ENCODE measurements at regions of chr16 and their contacts with region 1.

Region 1: GRCh38 chr16:23435500-23435899 is 17.5 kb downstream of the COG7 start:
- DNase-seq: peak; percentile 72
- H3K4me3 Mint-ChIP-seq: no peak overlapping the region
- H3K27ac Mint-ChIP-seq: no peak overlapping the region
- H3K4me1 Mint-ChIP-seq: peaks cover 3% of the 10 kb centered on the region
- H3K27me3 Mint-ChIP-seq: no peaks in the 10 kb centered on the region

Region 2: DNA sequence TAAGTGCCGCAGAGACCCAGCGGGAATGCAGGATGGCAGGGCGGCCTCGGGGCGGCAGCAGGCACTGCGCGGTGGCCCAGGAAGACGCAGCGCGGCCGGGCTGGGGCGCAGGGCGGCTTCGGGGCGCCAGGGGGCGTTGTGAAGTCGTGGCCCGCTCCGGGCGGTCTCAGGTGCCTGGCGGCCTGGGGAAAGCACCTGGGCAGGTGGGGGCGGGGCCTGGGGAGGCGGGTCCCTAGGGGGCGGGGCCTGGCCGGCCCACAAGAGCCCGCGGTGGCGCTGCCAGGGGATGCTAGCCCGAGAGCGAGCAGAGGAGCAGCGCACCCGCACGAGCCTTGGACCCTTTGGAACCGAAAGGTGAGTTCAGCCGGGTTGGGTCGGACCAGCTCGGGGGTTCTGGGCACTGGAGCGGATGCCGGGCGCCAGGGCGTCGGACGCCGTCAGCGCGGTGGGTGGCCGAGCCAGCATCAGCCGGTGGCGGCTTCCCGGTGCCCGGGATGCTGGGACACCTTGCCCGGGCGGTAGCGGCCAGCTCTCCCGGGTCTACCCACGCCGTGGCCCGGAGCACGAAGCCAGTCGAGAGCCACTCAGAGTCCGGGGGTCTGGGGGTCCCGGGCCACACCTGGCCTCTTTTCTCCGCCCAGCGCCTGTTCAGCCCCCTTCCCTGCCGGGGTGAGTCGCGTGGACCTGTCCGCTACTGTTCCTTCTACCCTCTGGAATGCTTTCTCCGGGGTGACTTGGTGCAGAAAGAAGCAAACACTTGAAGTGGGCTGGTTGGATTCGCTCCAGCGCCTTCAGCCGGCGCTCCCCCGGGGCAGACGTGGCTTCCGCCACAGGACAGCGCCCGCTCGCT is 252.8 kb before region 1 on chr16 and contains the start of gene SCNN1G:
- CTCF ChIA-PET with region 1: interaction called, 100 read pairs
- POLR2A ChIA-PET with region 1: no interaction called
- DNase-seq: peak; percentile 76
- H3K4me3 Mint-ChIP-seq: peak within 1 kb of the TSS; percentile 16
- H3K27ac Mint-ChIP-seq: no peak within 1 kb of the TSS
- H3K4me1 Mint-ChIP-seq: peaks cover 8% of the 10 kb centered on the region
- H3K27me3 Mint-ChIP-seq: peaks cover 58% of the 10 kb centered on the region
- total RNA-seq, gene SCNN1G: not detected

Region 3: GRCh38 chr16:23330583-23331249 is 104.8 kb before region 1 on chr16:
- CTCF ChIA-PET with region 1: no interaction called
- POLR2A ChIA-PET with region 1: no interaction called
- DNase-seq: no peak
- H3K4me3 Mint-ChIP-seq: no peak overlapping the region
- H3K27ac Mint-ChIP-seq: no peak overlapping the region
- H3K4me1 Mint-ChIP-seq: peaks cover 1% of the 10 kb centered on the region
- H3K27me3 Mint-ChIP-seq: peaks cover 3% of the 10 kb centered on the region

Region 4: GRCh38 chr16:23416816-23417215 is 18.7 kb before region 1 on chr16:
- CTCF ChIA-PET with region 1: interaction called, 25 read pairs
- POLR2A ChIA-PET with region 1: no interaction called
- DNase-seq: no peak
- H3K4me3 Mint-ChIP-seq: no peak overlapping the region
- H3K27ac Mint-ChIP-seq: no peak overlapping the region
- H3K4me1 Mint-ChIP-seq: no peaks in the 10 kb centered on the region
- H3K27me3 Mint-ChIP-seq: no peaks in the 10 kb centered on the region

Region 5: GRCh38 chr16:23423496-23424049 is 11.9 kb before region 1 on chr16:
- CTCF ChIA-PET with region 1: interaction called, 32 read pairs
- POLR2A ChIA-PET with region 1: no interaction called
- DNase-seq: no peak
- H3K4me3 Mint-ChIP-seq: no peak overlapping the region
- H3K27ac Mint-ChIP-seq: no peak overlapping the region
- H3K4me1 Mint-ChIP-seq: no peaks in the 10 kb centered on the region
- H3K27me3 Mint-ChIP-seq: no peaks in the 10 kb centered on the region

Region 6: GRCh38 chr16:23452572-23453337 is 17.3 kb after region 1 on chr16 and contains the start of gene COG7:
- CTCF ChIA-PET with region 1: interaction called, 15 read pairs
- POLR2A ChIA-PET with region 1: no interaction called
- DNase-seq: peak; percentile 89
- H3K4me3 Mint-ChIP-seq: peak within 1 kb of the TSS; percentile 90
- H3K27ac Mint-ChIP-seq: peak within 1 kb of the TSS; percentile 58
- H3K4me1 Mint-ChIP-seq: peaks cover 27% of the 10 kb centered on the region
- H3K27me3 Mint-ChIP-seq: no peaks in the 10 kb centered on the region
- total RNA-seq, gene COG7: 18.0 to 19.0 TPM

Region 7: DNA sequence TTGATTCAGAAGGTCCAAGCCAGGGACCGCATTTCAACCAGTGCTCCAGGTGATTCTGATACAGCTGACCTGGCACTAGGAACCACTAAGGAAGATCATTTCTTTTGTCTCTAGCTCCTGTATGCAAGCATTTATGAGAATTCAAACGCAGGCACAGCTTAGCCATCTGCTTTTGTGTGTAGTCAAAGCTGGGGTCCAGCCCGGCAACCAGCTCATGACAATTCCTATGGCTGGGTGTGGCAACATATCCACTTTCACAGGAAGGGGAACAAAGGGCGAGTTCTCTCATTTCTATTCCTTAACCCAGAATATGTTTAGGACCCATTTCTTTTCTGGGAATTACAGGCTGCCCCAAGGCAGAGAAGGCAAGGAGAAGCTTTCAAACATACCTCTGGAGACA is 44.8 kb after region 1 on chr16:
- CTCF ChIA-PET with region 1: no interaction called
- POLR2A ChIA-PET with region 1: no interaction called
- DNase-seq: no peak
- H3K4me3 Mint-ChIP-seq: no peak overlapping the region
- H3K27ac Mint-ChIP-seq: no peak overlapping the region
- H3K4me1 Mint-ChIP-seq: peaks cover 10% of the 10 kb centered on the region
- H3K27me3 Mint-ChIP-seq: no peaks in the 10 kb centered on the region

Region 8: DNA sequence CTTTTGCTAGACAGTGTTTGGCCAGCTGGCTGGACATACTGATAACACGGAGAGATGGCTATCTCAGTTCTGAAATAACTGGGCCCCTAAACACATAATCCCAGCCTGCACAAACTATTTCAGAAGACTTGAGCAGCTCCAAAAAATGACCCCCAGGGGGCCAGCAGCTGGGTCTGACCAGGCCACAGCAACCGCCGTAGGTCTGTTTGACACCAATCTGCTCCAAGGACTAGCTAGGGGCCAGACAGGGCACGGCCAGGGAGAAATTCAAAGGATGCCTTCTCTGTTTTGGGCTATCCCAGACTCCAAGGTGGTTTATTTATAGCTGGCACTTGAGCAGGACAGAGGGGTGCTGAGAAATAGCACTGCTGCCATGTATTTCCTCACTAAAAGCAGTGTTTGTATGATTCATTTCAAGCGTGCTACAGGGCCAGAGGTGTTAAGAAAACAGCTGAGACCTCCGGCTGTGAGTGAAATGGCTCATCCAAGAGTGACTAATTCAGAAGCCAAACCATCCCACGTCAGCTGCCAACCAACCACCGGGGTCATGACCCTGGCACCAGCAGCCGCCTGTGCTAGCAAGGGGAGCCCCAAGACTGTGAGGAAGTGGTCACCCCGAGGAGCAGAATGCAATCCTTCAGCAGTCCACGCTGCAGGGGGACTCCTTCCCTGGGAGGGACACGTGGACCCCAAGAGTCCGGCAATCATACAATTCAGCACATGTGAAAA is 69.1 kb after region 1 on chr16:
- CTCF ChIA-PET with region 1: interaction called, 10 read pairs
- POLR2A ChIA-PET with region 1: no interaction called
- DNase-seq: peak; percentile 92
- H3K4me3 Mint-ChIP-seq: peak overlapping the region; percentile 2
- H3K27ac Mint-ChIP-seq: peak overlapping the region; percentile 71
- H3K4me1 Mint-ChIP-seq: peaks cover 78% of the 10 kb centered on the region
- H3K27me3 Mint-ChIP-seq: no peaks in the 10 kb centered on the region

Region 9: GRCh38 chr16:23595951-23596720 is 160.6 kb after region 1 on chr16 and contains the start of gene NDUFAB1:
- CTCF ChIA-PET with region 1: interaction called, 11 read pairs
- POLR2A ChIA-PET with region 1: no interaction called
- DNase-seq: peak; percentile 93
- H3K4me3 Mint-ChIP-seq: peak within 1 kb of the TSS; percentile 80
- H3K27ac Mint-ChIP-seq: peak within 1 kb of the TSS; percentile 68
- H3K4me1 Mint-ChIP-seq: peaks cover 24% of the 10 kb centered on the region
- H3K27me3 Mint-ChIP-seq: no peaks in the 10 kb centered on the region
- total RNA-seq, gene NDUFAB1: 79.8 to 81.1 TPM

Region 10: GRCh38 chr16:23724096-23724784 is 288.7 kb after region 1 on chr16:
- CTCF ChIA-PET with region 1: no interaction called
- POLR2A ChIA-PET with region 1: no interaction called
- DNase-seq: no peak
- H3K4me3 Mint-ChIP-seq: no peak overlapping the region
- H3K27ac Mint-ChIP-seq: no peak overlapping the region
- H3K4me1 Mint-ChIP-seq: peaks cover 3% of the 10 kb centered on the region
- H3K27me3 Mint-ChIP-seq: peaks cover 15% of the 10 kb centered on the region